ENCODE measurements at regions of chr22 and their contacts with region 1.

Region 1: DNA sequence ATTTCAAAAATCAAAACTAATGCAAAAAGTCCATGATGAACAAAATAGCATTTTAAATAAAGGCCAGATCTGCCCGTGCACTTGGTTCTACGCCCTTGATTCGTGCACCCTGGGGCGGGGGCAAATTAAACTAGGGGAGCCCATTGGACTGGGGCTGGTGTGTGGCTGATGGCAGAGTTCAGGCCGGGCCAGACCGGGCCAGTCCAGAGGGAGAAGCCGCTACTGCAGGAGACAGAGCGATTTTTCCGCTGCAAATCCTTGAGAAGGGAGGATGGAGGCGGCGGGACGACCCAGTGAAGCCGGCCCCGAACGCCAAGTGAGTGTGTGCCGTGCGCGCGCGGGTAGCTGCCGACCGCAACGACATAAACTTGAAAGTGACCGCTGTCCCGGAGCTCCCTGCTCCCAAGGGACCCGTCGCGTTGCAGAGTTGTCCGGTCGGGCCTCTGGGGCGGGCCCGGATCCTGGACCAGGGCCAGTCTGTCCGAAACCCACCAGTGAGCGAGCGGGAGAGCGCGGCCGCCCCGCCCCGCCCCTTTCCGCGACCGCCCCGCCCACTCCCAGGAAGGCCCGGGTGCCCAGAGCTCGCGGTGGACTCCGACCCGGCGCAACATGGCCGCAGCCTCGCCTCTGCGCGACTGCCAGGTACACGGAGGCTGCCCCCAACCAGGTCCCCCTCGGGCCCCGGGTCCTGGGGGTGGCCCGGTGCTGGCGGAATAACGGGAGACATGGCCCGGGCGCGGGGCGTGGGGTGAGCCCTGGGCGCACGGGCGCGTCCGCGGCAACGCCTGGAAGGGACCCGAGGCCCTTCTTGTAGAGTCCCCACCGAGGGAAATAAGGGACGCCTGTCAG is at the start of gene TTC38:
- DNase-seq: peak; percentile 68
- H3K4me3 ChIP-seq: peak within 1 kb of the TSS; percentile 61 to 93 (median 71)
- H3K27ac ChIP-seq: no peak within 1 kb of the TSS
- H3K4me1 ChIP-seq: peaks cover 3% of the 10 kb centered on the region
- H3K27me3 ChIP-seq: no peaks in the 10 kb centered on the region
- CTCF ChIP-seq: no peak
- total RNA-seq, gene TTC38: 14.3 to 16.0 TPM

Region 2: GRCh38 chr22:46250035-46250782 is 17.4 kb before region 1 on chr22 and contains the start of gene CDPF1:
- CTCF ChIA-PET with region 1: no interaction called
- dilution Hi-C with region 1: no loop called
- in situ Hi-C with region 1: no loop called
- intact Hi-C with region 1: loop called (anchors 2 kb)
- DNase-seq: peak; percentile 87
- H3K4me3 ChIP-seq: peak within 1 kb of the TSS; percentile 73 to 98 (median 89)
- H3K27ac ChIP-seq: peak within 1 kb of the TSS; percentile 36
- H3K4me1 ChIP-seq: peaks cover 9% of the 10 kb centered on the region
- H3K27me3 ChIP-seq: no peaks in the 10 kb centered on the region
- CTCF ChIP-seq: peak in 1 of 2 donors; percentile 18
- total RNA-seq, gene CDPF1: 5.7 to 8.0 TPM

Region 3: DNA sequence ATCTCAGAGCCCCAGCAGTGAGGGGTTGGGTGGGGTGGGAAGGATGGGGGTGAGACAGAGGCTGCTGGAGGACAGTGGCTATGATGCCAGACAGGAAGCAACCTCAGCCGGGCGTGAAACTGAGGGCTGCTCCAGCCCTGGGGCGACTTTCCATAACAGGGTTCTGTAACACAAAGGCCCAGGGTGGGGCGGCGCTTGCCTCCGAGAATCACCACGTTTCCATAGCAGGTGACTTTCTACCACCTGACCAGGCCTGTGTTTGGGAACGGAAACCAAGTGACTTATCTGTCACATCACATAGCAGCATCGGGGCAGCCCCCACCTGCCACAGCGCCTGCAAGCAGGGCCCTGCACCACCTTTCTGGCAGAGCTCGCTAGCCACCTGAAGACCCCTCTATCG is 153.6 kb after region 1 on chr22:
- CTCF ChIA-PET with region 1: no interaction called
- dilution Hi-C with region 1: no loop called
- in situ Hi-C with region 1: no loop called
- intact Hi-C with region 1: no loop called
- DNase-seq: no peak
- H3K4me3 ChIP-seq: no peak overlapping the region
- H3K27ac ChIP-seq: no peak overlapping the region
- H3K4me1 ChIP-seq: peaks cover 3% of the 10 kb centered on the region
- H3K27me3 ChIP-seq: no peaks in the 10 kb centered on the region
- CTCF ChIP-seq: no peak